Activated CD8-positive, alpha-beta T cell treated with anti-CD3 and anti-CD28 coated beads for 36 hours (primary cell): ENCODE measurements at regions of chr17 and their contacts with region 1.

Region 1: GRCh38 chr17:31494259-31495021 is 103.0 kb downstream of the RAB11FIP4 start:
- DNase-seq: peak; percentile 86
- ATAC-seq: peak; percentile 73
- H3K4me3 Mint-ChIP-seq: peak overlapping the region; percentile 69
- H3K27ac Mint-ChIP-seq: peak overlapping the region; percentile 97
- H3K4me1 Mint-ChIP-seq: peaks cover 94% of the 10 kb centered on the region
- H3K27me3 Mint-ChIP-seq: no peaks in the 10 kb centered on the region
- CTCF ChIP-seq: no peak

Region 2: GRCh38 chr17:31321481-31321880 is 173.0 kb before region 1 on chr17 and contains the start of gene EVI2A:
- CTCF ChIA-PET with region 1: no interaction called
- POLR2A ChIA-PET with region 1: interaction called, 4 read pairs
- intact Hi-C with region 1: loop called (anchors 5 kb)
- DNase-seq: peak; percentile 94
- ATAC-seq: peak; percentile 92
- H3K4me3 Mint-ChIP-seq: peak within 1 kb of the TSS; percentile 75
- H3K27ac Mint-ChIP-seq: peak within 1 kb of the TSS; percentile 92
- H3K4me1 Mint-ChIP-seq: peaks cover 20% of the 10 kb centered on the region
- H3K27me3 Mint-ChIP-seq: no peaks in the 10 kb centered on the region
- CTCF ChIP-seq: no peak
- total RNA-seq, gene EVI2A: 31.7 to 37.0 TPM

Region 3: GRCh38 chr17:31462261-31462660 is 32.2 kb before region 1 on chr17:
- CTCF ChIA-PET with region 1: no interaction called
- POLR2A ChIA-PET with region 1: no interaction called
- intact Hi-C with region 1: no loop called
- DNase-seq: no peak
- ATAC-seq: no peak
- H3K4me3 Mint-ChIP-seq: no peak overlapping the region
- H3K27ac Mint-ChIP-seq: no peak overlapping the region
- H3K4me1 Mint-ChIP-seq: peaks cover under 1% of the 10 kb centered on the region
- H3K27me3 Mint-ChIP-seq: no peaks in the 10 kb centered on the region
- CTCF ChIP-seq: no peak

Region 4: DNA sequence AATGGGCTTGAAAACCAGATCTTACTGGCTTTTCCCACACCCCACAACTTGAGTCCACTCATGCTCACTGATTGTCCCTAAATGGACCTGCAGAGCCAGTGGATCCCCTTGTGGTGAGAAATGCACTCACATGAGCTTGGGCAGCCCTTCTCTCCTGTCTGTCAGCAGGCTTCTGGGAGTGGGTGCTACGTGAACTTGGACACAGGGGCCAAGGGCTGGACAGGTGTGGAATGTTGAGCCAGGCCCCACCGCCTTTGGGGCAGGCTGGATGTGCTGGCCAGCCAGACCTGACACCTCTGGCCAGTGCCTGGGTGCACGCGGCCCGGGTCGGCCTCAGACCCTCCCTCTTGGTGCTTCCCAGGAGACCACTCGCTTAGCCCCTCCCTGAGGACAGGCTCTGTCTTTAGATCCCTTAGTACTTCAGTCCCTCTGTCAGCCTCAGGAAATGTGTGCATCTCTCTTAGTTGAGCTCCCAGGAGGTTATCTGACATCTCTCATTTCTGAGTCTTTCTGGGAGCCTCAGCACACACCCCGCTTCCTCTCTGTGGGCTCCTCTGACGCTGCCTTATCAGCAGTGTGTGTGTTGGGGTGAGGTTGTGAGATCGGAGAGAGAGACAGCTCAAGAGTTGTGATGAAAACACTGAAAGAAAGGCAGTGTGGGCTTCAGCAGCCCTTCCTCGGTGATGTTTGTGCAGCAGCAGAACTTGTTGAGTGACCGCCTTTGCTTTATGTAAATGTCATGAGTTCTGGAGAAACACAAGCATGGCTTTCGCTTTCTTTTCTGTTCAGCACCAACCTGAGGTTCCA is 14.1 kb after region 1 on chr17:
- CTCF ChIA-PET with region 1: interaction called, 79 read pairs
- POLR2A ChIA-PET with region 1: interaction called, 175 read pairs
- intact Hi-C with region 1: no loop called
- DNase-seq: peak; percentile 81
- ATAC-seq: peak; percentile 82
- H3K4me3 Mint-ChIP-seq: peak overlapping the region; percentile 76
- H3K27ac Mint-ChIP-seq: peak overlapping the region; percentile 98
- H3K4me1 Mint-ChIP-seq: peaks cover 62% of the 10 kb centered on the region
- H3K27me3 Mint-ChIP-seq: no peaks in the 10 kb centered on the region
- CTCF ChIP-seq: peak; percentile 72